CD8-positive, alpha-beta memory T cell (primary cell): ENCODE measurements at regions of chr11 and their contacts with region 1.

Region 1: DNA sequence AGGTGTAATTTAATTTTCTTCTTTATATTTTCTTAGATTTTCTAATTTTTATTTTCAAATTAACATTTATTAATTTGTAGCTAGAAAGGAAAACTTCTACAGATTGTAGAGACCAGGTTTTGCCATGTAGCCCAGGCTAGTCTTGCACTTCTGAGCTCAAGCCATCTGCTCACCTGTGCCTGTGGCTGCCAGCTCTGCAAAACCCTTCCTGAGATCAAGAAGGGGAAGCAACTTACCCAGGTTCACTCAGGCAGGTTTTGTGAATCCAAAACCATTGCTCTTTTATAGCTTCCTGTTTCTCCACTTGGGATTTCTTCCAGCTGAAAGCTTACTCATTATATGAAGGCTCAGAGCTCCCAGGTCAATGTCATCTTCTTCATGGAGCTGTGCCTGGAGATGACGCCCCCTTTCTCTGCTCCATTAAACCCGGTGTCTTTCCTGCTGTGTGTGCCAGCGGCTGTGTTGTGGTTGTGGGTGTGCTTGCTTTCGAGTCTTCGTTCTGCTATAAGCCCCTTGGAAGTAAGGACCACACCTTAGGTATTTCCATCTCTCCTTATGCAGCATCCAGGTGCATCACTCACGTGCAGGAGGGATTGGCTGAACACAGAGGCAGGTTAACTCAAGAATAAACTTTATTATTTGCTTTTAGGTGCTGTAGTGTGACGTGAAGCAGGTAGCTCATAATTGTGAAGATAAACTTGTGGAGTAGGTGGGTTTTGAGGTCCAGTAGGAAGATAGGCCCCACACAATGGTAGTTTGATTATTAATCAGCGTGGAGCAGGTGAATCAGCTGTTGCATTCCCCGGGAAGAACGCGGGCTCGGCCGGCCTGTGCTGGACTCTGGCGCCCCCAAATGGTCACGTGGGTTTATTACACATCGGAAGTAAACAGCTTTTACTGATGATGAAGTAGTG is 42.2 kb upstream of the INCENP start:
- DNase-seq: peak; percentile 64 to 80 (median 70)
- H3K4me3 ChIP-seq: peak overlapping the region; percentile 27
- H3K4me3 Mint-ChIP-seq: peak overlapping the region in 6 of 7 donors; percentile 18 to 73 (median 49)
- H3K27ac ChIP-seq: no peak overlapping the region
- H3K27ac Mint-ChIP-seq: peak overlapping the region in 6 of 8 donors; percentile 1 to 74 (median 38)
- H3K4me1 ChIP-seq: peaks cover 4% of the 10 kb centered on the region
- H3K4me1 Mint-ChIP-seq: peaks cover 6 to 9% (median 8%) of the 10 kb centered on the region in 3 donors
- H3K27me3 ChIP-seq: no peaks in the 10 kb centered on the region
- H3K27me3 Mint-ChIP-seq: peaks cover 1 to 2% of the 10 kb centered on the region in 2 donors

Region 2: GRCh38 chr11:61871158-61871597 is 210.5 kb before region 1 on chr11:
- CTCF ChIA-PET with region 1: interaction called, 11 read pairs
- POLR2A ChIA-PET with region 1: no interaction called
- DNase-seq: peak; percentile 23 to 64 (median 47)
- H3K4me3 ChIP-seq: no peak overlapping the region
- H3K4me3 Mint-ChIP-seq: peak overlapping the region in 6 of 7 donors; percentile 61 to 74 (median 68)
- H3K27ac ChIP-seq: no peak overlapping the region
- H3K27ac Mint-ChIP-seq: peak overlapping the region in 1 of 8 donors; percentile 55
- H3K4me1 ChIP-seq: peaks cover 8% of the 10 kb centered on the region
- H3K4me1 Mint-ChIP-seq: peaks cover 4 to 7% (median 7%) of the 10 kb centered on the region in 3 donors
- H3K27me3 ChIP-seq: no peaks in the 10 kb centered on the region
- H3K27me3 Mint-ChIP-seq: peaks cover 1 to 9% of the 10 kb centered on the region in 2 donors

Region 3: DNA sequence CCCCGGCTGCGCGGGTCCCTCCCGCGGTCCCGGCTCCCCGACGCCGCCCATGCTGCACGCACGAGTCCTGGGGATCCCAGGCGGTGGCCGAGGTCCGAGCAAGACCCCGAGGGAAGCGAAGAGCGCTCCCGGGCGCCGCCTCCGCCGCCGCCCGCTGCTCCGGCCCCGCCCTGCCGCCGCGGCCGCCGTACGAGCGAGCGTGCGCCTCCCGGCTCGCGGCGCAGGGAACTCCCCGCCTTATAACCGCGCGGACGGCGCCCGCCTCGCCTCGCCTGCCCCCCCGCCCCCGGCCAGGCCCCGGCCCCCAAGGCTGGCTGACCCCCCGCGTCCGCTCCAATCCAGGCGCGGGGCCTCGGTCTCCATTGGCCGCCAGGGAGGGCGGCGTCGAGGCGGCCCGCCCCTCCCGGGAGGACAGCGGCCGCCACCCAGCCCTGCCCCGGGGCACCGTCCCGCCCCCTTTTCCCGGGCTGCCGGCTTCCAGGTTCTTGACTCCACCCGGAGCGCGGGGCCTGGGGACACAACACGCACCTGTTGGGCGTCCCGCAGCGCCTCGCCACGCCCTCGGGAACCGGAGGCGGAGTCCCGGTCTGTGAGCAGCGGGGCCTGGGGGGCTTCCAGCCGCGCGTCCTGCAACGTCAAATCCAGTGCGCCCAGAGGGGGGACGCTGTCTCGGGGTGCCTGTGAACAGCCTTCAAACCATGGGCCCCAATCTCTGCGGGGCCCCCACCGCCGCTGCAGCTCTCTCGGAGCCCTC is 190.1 kb before region 1 on chr11 and contains the start of gene FADS3:
- CTCF ChIA-PET with region 1: interaction called, 232 read pairs
- POLR2A ChIA-PET with region 1: no interaction called
- DNase-seq: peak; percentile 67 to 78 (median 70)
- H3K4me3 ChIP-seq: peak within 1 kb of the TSS; percentile 72
- H3K4me3 Mint-ChIP-seq: peak within 1 kb of the TSS; percentile 78 to 91 (median 84)
- H3K27ac ChIP-seq: peak within 1 kb of the TSS; percentile 61
- H3K27ac Mint-ChIP-seq: peak within 1 kb of the TSS; percentile 50 to 90 (median 80)
- H3K4me1 ChIP-seq: peaks cover 12% of the 10 kb centered on the region
- H3K4me1 Mint-ChIP-seq: peaks cover 4 to 11% (median 4%) of the 10 kb centered on the region in 3 donors
- H3K27me3 ChIP-seq: no peaks in the 10 kb centered on the region
- H3K27me3 Mint-ChIP-seq: no peaks in the 10 kb centered on the region
- total RNA-seq, gene FADS3: 5.8 to 7.7 TPM

Region 4: GRCh38 chr11:61923166-61924063 is 158.2 kb before region 1 on chr11:
- CTCF ChIA-PET with region 1: interaction called, 10 read pairs
- POLR2A ChIA-PET with region 1: no interaction called
- DNase-seq: no peak
- H3K4me3 ChIP-seq: no peak overlapping the region
- H3K4me3 Mint-ChIP-seq: no peak overlapping the region
- H3K27ac ChIP-seq: no peak overlapping the region
- H3K27ac Mint-ChIP-seq: peak overlapping the region in 1 of 8 donors; percentile 43
- H3K4me1 ChIP-seq: no peaks in the 10 kb centered on the region
- H3K4me1 Mint-ChIP-seq: peaks cover 0 to 1% (median under 1%) of the 10 kb centered on the region in 3 donors
- H3K27me3 ChIP-seq: peaks cover under 1% of the 10 kb centered on the region
- H3K27me3 Mint-ChIP-seq: peaks cover 26 to 42% of the 10 kb centered on the region in 2 donors

Region 5: DNA sequence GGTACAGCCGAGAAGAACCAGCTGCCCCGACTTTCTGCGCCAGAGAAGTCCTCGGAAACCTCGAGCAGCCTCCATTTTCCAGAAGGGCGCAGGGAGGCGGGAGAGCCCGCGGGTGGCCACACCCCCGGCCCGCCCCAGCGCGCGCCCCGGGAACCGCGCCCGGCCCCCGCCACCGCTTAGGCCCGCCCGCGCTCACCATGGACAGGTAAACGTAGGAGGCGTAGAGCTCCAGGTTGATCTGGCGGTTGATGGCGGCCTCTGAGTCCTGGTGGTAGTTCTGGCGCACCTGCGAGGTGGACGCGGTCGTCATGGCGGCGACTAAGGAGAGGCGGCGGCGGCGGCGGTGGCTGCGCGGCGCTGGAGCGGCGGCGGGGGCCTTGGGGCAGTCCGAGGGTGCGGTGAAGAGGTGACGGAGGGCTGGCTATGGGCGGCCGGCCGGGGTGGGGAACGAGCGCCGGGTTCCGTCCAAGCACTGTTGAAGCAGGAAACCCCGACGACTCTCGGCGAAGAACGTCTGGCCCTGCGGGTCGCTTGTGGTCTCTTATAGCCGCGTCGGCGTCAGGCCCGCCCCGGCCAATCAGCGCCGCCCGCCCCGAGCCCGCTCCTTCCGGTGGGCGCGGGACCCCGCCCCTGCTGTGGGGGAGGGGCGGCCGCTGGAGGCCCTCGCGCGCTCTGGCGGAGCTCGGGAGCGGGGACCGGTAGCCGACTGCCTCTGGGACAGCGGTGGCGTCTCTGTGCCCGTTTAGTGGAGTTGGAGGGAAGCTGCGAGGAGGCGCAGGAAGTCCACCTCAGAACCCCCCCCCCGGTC is 114.3 kb before region 1 on chr11 and contains the start of gene FTH1:
- CTCF ChIA-PET with region 1: interaction called, 26 read pairs
- POLR2A ChIA-PET with region 1: interaction called, 12 read pairs
- DNase-seq: peak; percentile 83 to 95 (median 90)
- H3K4me3 ChIP-seq: peak within 1 kb of the TSS; percentile 98
- H3K4me3 Mint-ChIP-seq: peak within 1 kb of the TSS; percentile 95 to 100 (median 95)
- H3K27ac ChIP-seq: peak within 1 kb of the TSS; percentile 94
- H3K27ac Mint-ChIP-seq: peak within 1 kb of the TSS; percentile 96 to 100 (median 98)
- H3K4me1 ChIP-seq: peaks cover 42% of the 10 kb centered on the region
- H3K4me1 Mint-ChIP-seq: peaks cover 55 to 72% (median 60%) of the 10 kb centered on the region in 3 donors
- H3K27me3 ChIP-seq: no peaks in the 10 kb centered on the region
- H3K27me3 Mint-ChIP-seq: peaks cover 0 to 9% of the 10 kb centered on the region in 2 donors
- total RNA-seq, gene FTH1: 490 to 506 TPM

Region 6: DNA sequence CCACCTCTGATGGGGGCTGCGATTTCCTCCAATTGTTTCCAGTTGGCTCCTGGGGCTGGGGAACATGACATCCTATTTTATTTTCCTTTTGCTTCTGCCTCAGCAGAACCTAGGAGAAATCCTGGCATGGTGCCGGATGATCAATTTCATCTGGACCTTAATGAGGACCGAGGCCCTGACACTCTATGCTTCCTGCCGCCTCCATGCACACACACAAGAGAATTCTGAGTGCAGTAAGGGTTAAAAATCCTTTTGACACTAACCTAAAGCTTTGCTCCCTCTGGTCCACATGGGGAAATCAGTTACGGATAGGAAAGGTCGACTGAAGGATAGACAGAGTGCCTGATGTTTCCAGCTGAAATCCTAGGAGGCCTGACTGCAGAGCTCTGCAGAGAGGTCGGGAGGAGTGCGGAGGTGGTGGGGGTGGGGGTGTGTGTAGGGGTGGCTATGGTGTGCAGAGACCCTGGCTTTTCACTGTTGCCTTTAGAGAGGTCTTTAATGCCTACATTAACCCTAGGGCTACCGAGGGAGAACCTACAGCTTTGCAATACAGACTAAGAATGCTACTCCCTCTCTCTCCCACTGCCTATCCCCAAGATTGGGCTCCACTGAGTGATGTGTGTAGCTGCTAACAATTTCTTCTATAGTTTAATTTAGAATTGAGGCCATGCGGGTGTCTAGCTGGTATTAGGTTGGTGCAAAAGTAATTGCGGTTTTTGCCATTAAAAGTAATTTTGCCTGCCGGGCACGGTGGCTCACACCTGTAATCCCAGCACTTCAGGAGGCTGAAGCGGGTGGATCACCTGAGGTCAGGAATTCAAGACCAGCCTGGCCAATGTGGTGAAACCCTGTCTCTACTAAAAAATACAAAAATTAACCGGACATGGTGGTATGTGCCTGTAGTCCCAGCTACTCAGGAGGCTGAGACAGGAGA is 11.4 kb before region 1 on chr11:
- CTCF ChIA-PET with region 1: interaction called, 18 read pairs
- POLR2A ChIA-PET with region 1: no interaction called
- DNase-seq: no peak
- H3K4me3 ChIP-seq: no peak overlapping the region
- H3K4me3 Mint-ChIP-seq: no peak overlapping the region
- H3K27ac ChIP-seq: no peak overlapping the region
- H3K27ac Mint-ChIP-seq: no peak overlapping the region
- H3K4me1 ChIP-seq: no peaks in the 10 kb centered on the region
- H3K4me1 Mint-ChIP-seq: no peaks in the 10 kb centered on the region
- H3K27me3 ChIP-seq: no peaks in the 10 kb centered on the region
- H3K27me3 Mint-ChIP-seq: peaks cover 3 to 21% of the 10 kb centered on the region in 2 donors

Region 7: GRCh38 chr11:62129590-62130292 is 48.1 kb after region 1 on chr11:
- CTCF ChIA-PET with region 1: no interaction called
- POLR2A ChIA-PET with region 1: no interaction called
- DNase-seq: no peak
- H3K4me3 ChIP-seq: no peak overlapping the region
- H3K4me3 Mint-ChIP-seq: no peak overlapping the region
- H3K27ac ChIP-seq: no peak overlapping the region
- H3K27ac Mint-ChIP-seq: no peak overlapping the region
- H3K4me1 ChIP-seq: peaks cover 11% of the 10 kb centered on the region
- H3K4me1 Mint-ChIP-seq: peaks cover 35 to 47% (median 46%) of the 10 kb centered on the region in 3 donors
- H3K27me3 ChIP-seq: no peaks in the 10 kb centered on the region
- H3K27me3 Mint-ChIP-seq: no peaks in the 10 kb centered on the region